HEK293 (cell line): ENCODE measurements at regions of chr7 and their contacts with region 1.

Region 1: GRCh38 chr7:112898432-112899290 is 108.5 kb upstream of the TMEM168 start:
- H3K4me3 ChIP-seq: no peak overlapping the region
- H3K27ac ChIP-seq: no peak overlapping the region
- H3K4me1 ChIP-seq: no peaks in the 10 kb centered on the region
- CTCF ChIP-seq: peak; percentile 75

Region 2: DNA sequence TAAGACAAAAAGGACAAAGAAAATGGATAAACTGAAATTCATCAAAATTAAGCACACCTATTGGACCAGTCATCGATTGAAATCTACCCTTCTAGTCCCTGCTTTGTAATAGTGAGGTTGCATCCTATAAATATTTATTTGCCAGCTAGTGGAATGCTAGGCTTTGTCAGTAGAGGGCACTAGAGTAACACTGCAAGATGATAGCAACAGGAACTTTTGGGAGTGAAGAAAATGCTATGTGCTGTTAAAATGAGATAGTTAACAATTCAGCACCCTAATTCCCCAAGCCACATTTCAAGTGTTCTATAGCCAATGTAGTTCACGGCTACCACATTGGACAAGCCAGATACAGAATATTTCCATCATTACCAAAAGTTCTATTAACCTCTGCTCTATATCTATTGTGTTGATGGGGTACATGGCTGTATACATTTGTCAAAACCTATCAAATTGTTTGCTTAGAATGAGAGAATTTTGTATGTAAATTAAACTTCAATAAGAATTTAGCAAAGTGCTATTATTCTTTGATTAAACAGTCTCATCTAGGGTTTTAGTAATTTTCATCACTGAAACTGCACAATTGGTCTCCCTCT is 348.1 kb before region 1 on chr7:
- CTCF ChIA-PET with region 1: interaction called, 26 read pairs
- POLR2A ChIA-PET with region 1: no interaction called
- H3K4me3 ChIP-seq: no peak overlapping the region
- H3K27ac ChIP-seq: no peak overlapping the region
- H3K4me1 ChIP-seq: no peaks in the 10 kb centered on the region
- CTCF ChIP-seq: peak; percentile 29; the same call in 1 of the 2 replicates

Region 3: GRCh38 chr7:112855227-112855626 is 43.4 kb before region 1 on chr7:
- CTCF ChIA-PET with region 1: no interaction called
- POLR2A ChIA-PET with region 1: interaction called, 10 read pairs
- H3K4me3 ChIP-seq: no peak overlapping the region
- H3K27ac ChIP-seq: no peak overlapping the region
- H3K4me1 ChIP-seq: peaks cover 6% of the 10 kb centered on the region; the same call in 1 of the 2 replicates
- CTCF ChIP-seq: no peak